Calu3 (cell line): ENCODE measurements at regions of chr16 and their contacts with region 1.

Region 1: DNA sequence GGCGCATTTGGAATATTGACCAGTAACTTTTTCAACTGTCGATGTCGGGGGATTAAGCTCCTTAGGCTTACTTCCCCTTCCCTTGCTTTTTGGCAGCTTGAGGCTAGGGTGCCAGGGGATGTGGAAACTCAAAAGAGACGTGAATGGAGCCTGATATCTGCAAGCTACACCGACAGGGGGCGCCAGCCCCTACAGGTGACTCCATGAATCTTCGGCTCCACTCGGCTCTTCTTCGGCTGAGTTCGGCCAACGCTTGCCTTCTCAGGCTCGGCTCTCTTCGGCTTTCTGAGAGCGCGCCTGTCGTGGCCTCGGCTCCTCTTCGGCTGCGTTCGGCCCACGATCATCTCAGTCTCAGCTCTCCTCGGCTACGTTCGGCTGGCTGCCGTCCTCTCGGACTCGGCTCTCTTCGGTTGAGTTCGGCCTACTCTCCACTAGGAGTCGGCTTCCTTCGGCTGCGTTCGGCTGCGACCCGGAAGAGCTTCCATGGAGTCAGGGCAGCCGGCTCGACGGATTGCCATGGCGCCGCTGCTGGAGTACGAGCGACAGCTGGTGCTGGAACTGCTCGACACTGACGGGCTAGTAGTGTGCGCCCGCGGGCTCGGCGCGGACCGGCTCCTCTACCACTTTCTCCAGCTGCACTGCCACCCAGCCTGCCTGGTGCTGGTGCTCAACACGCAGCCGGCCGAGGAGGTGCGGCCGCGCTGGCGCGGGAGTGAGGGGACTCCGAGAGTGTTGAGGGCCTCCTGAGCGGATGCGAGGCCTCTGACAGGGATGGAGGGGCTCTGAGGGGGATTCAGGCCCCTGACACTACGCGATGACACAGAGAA is at the start of gene ERCC4:
- DNase-seq: peak; percentile 99
- H3K4me3 Mint-ChIP-seq: peak within 1 kb of the TSS; percentile 100
- H3K27ac Mint-ChIP-seq: peak within 1 kb of the TSS; percentile 92
- H3K4me1 Mint-ChIP-seq: peaks cover 25% of the 10 kb centered on the region
- H3K27me3 Mint-ChIP-seq: peaks cover 16% of the 10 kb centered on the region
- CTCF ChIP-seq: peak; percentile 95
- total RNA-seq, gene ERCC4: 19.7 and 21.1 TPM in 2 replicates

Region 2: GRCh38 chr16:14070877-14071575 is 151.1 kb after region 1 on chr16 and contains the start of gene MRTFB:
- CTCF ChIA-PET with region 1: interaction called, 4 read pairs
- intact Hi-C with region 1: loop called (anchors 1 kb)
- DNase-seq: peak; percentile 94
- H3K4me3 Mint-ChIP-seq: peak within 1 kb of the TSS; percentile 93
- H3K27ac Mint-ChIP-seq: peak within 1 kb of the TSS; percentile 94
- H3K4me1 Mint-ChIP-seq: peaks cover 43% of the 10 kb centered on the region
- H3K27me3 Mint-ChIP-seq: no peaks in the 10 kb centered on the region
- CTCF ChIP-seq: no peak
- total RNA-seq, gene MRTFB: 67.3 and 69.5 TPM in 2 replicates

Region 3: DNA sequence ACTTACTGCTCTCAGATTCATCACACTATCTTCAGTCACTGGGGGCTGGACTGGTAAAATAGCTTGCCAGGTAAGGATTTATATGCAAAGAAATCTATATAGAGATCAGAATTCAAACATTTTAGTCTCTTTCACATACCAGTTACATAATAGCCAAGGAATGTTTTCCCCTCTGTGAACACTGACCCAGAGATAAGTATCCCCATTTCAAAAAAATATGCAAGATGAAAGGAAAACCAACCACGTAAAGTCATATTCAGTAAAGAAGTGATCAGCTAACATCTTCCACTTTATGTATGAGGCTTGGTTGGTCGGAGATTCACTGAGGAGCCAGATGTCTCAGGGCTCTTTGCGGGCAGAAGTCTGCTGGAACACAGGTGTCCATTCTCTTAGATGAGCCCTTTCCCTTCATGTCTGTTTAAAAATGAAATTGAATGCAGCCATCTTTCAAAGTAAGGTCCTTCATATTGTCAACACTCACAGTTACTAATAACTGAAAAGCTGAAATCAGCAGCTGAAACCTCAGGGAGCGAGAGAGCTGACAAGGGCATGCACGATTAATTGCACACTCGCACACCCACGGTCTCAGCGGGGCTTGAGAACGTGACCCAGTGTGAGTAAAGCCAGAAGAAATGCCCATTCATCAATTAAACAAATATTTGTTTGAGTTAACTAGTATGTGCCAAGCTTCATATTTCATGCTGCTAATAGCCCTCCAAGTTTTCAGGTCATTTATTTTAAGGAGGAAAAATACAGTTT is 312.4 kb after region 1 on chr16:
- CTCF ChIA-PET with region 1: interaction called, 3 read pairs
- intact Hi-C with region 1: loop called (anchors 5 kb)
- DNase-seq: peak; percentile 14
- H3K4me3 Mint-ChIP-seq: no peak overlapping the region
- H3K27ac Mint-ChIP-seq: no peak overlapping the region
- H3K4me1 Mint-ChIP-seq: no peaks in the 10 kb centered on the region
- H3K27me3 Mint-ChIP-seq: no peaks in the 10 kb centered on the region
- CTCF ChIP-seq: no peak

Region 4: GRCh38 chr16:14285513-14286385 is 365.9 kb after region 1 on chr16:
- CTCF ChIA-PET with region 1: interaction called, 15 read pairs
- intact Hi-C with region 1: loop called (anchors 1 kb)
- DNase-seq: peak; percentile 96
- H3K4me3 Mint-ChIP-seq: peak overlapping the region; percentile 82
- H3K27ac Mint-ChIP-seq: peak overlapping the region; percentile 93
- H3K4me1 Mint-ChIP-seq: peaks cover 8% of the 10 kb centered on the region
- H3K27me3 Mint-ChIP-seq: no peaks in the 10 kb centered on the region
- CTCF ChIP-seq: no peak